GM10248 (cell line): ENCODE measurements at regions of chr17 and their contacts with region 1.

Region 1: GRCh38 chr17:37770631-37771518 is 26.0 kb upstream of the HNF1B start:
- DNase-seq: no peak
- CTCF ChIP-seq: peak; percentile 63

Region 2: DNA sequence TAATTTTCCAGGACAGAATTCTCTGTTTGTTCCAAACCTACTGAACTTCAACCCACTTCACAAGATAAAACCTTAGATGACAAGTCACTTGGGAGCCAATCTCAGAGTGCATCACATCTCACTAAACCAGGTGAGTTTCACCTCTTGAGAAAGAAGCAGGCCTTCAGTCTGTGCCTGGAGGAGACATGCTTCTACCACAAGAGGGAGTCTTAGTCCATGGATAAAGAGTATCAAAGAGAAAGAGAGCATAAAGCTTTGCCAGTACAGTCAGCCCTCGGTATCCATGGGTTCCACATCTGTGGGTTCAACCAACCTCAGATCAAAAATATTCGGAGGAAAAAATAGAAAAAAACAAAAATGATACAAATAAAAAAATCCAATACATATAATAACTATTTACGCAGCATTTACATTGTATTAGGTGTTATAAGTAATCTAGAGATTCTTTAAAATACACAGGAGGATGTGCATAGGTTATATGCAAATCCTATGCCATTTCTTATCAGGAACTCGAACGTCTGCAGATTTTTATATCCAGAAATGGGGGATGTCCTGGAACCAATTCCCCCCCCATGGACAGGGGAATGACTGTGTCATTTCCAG is 243.5 kb before region 1 on chr17:
- CTCF ChIA-PET with region 1: no interaction called
- POLR2A ChIA-PET with region 1: no interaction called
- DNase-seq: peak; percentile 38
- CTCF ChIP-seq: peak; percentile 60

Region 3: DNA sequence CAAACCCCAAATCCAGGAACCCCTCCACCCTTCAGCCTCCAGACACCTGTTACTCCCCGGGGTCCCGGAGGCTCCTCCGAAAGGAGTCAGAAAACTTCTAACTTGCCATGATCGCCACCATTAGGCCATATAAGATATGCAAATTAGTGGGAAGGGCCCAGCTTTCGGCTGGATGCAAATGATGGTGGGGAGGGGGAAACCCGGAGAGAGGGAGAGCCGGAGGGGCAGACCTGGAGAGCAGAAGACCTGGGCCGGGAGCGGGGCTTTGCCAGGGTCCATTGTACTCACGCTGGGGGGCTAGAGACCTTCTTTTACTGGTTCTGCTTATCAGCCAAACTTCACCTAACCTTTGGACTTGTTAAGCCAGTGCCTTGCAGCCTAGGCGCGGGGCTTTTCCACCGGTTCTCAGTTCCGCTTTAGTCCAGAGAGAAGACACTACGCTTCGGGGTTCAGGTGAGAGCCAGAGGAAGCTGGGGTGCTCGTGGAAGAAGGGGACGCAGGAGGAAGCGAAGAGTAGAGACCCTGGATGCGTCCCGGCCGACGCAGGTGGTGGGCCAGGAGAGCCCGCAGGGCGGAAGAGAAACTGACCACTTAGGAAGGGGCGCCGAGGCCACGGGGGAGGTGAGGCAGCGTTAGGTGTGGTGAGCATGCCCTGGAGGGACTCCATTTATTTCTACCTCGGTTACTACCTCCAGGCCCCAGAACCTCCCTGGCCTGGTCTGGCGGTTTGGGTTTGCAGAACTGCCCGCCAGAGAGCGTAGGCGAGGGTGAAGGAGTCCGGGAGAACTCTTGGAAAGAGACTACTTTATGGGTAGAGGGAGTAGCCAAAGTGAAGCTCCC is 25.7 kb before region 1 on chr17 and contains the start of gene HNF1B:
- CTCF ChIA-PET with region 1: interaction called, 16 read pairs
- POLR2A ChIA-PET with region 1: no interaction called
- DNase-seq: peak; percentile 80
- CTCF ChIP-seq: no peak

Region 4: GRCh38 chr17:37844158-37844976 is 73.5 kb after region 1 on chr17:
- CTCF ChIA-PET with region 1: no interaction called
- POLR2A ChIA-PET with region 1: no interaction called
- DNase-seq: peak; percentile 85
- CTCF ChIP-seq: peak; percentile 93